ENCODE measurements at regions of chr18 and their contacts with region 1.

Region 1: GRCh38 chr18:62209046-62209445 is 22.0 kb downstream of the RELCH start:
- DNase-seq: no peak
- ATAC-seq: no peak
- H3K4me3 ChIP-seq: no peak overlapping the region
- H3K4me3 Mint-ChIP-seq: no peak overlapping the region
- H3K27ac ChIP-seq: no peak overlapping the region
- H3K27ac Mint-ChIP-seq: no peak overlapping the region
- H3K4me1 ChIP-seq: no peaks in the 10 kb centered on the region
- H3K4me1 Mint-ChIP-seq: peaks cover 55 to 61% (median 60%) of the 10 kb centered on the region in 3 donors
- H3K27me3 ChIP-seq: no peaks in the 10 kb centered on the region
- H3K27me3 Mint-ChIP-seq: no peaks in the 10 kb centered on the region

Region 2: GRCh38 chr18:62109676-62110075 is 99.4 kb before region 1 on chr18:
- CTCF ChIA-PET with region 1: no interaction called
- POLR2A ChIA-PET with region 1: no interaction called
- DNase-seq: no peak
- ATAC-seq: no peak
- H3K4me3 ChIP-seq: no peak overlapping the region
- H3K4me3 Mint-ChIP-seq: no peak overlapping the region
- H3K27ac ChIP-seq: no peak overlapping the region
- H3K27ac Mint-ChIP-seq: no peak overlapping the region
- H3K4me1 ChIP-seq: no peaks in the 10 kb centered on the region
- H3K4me1 Mint-ChIP-seq: no peaks in the 10 kb centered on the region
- H3K27me3 ChIP-seq: no peaks in the 10 kb centered on the region
- H3K27me3 Mint-ChIP-seq: no peaks in the 10 kb centered on the region

Region 3: GRCh38 chr18:62790871-62791772 is 582.1 kb after region 1 on chr18:
- CTCF ChIA-PET with region 1: no interaction called
- POLR2A ChIA-PET with region 1: interaction called in 1 of 2 experiments, 15 read pairs
- DNase-seq: no peak
- ATAC-seq: no peak
- H3K4me3 ChIP-seq: no peak overlapping the region
- H3K4me3 Mint-ChIP-seq: no peak overlapping the region
- H3K27ac ChIP-seq: no peak overlapping the region
- H3K27ac Mint-ChIP-seq: no peak overlapping the region
- H3K4me1 ChIP-seq: peaks cover 2 to 10% of the 10 kb centered on the region in 2 experiments
- H3K4me1 Mint-ChIP-seq: peaks cover 31 to 45% (median 36%) of the 10 kb centered on the region in 3 donors
- H3K27me3 ChIP-seq: no peaks in the 10 kb centered on the region
- H3K27me3 Mint-ChIP-seq: no peaks in the 10 kb centered on the region